ENCODE measurements at regions of chr5 and their contacts with region 1.

Region 1: DNA sequence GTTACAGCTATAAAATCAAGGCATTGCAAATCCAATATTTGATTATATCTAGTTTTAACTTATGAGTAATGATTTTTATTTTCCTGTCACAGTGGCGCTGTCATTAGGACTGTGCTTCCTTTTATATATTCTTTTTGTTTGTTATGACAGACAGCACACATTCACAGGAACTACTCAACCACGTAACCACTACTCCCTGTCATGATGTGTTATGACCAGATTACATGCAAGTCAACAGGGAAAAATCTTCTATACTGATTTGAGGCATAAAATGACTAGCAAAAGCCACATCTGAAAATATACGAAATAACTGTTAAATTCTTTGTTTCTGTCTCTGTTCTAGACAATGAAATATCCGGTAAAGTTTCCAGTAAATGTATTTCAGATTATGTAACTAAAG is 25.4 kb downstream of the SREK1 start:
- DNase-seq: peak; percentile 22
- ATAC-seq: peak; percentile 82
- H3K4me3 ChIP-seq: no peak overlapping the region
- H3K27ac ChIP-seq: no peak overlapping the region
- H3K4me1 ChIP-seq: peaks cover 4% of the 10 kb centered on the region; the same call in 1 of the 2 replicates
- H3K27me3 ChIP-seq: no peaks in the 10 kb centered on the region
- CTCF ChIP-seq: no peak

Region 2: GRCh38 chr5:65721720-65722574 is 447.6 kb before region 1 on chr5 and contains the starts of genes NLN and SGTB:
- CTCF ChIA-PET with region 1: no interaction called
- POLR2A ChIA-PET with region 1: no interaction called
- intact Hi-C with region 1: loop called (anchors 10 kb)
- DNase-seq: peak; percentile 55
- ATAC-seq: peak; percentile 85
- H3K4me3 ChIP-seq: peak within 1 kb of the TSS; percentile 81
- H3K27ac ChIP-seq: peak within 1 kb of the TSS; percentile 18; the same call in 1 of the 2 replicates
- H3K4me1 ChIP-seq: no peaks in the 10 kb centered on the region
- H3K27me3 ChIP-seq: no peaks in the 10 kb centered on the region
- CTCF ChIP-seq: no peak
- total RNA-seq, gene NLN: 7.9 and 13.6 TPM in 2 replicates
- total RNA-seq, gene SGTB: 0.98 and 1.1 TPM in 2 replicates

Region 3: DNA sequence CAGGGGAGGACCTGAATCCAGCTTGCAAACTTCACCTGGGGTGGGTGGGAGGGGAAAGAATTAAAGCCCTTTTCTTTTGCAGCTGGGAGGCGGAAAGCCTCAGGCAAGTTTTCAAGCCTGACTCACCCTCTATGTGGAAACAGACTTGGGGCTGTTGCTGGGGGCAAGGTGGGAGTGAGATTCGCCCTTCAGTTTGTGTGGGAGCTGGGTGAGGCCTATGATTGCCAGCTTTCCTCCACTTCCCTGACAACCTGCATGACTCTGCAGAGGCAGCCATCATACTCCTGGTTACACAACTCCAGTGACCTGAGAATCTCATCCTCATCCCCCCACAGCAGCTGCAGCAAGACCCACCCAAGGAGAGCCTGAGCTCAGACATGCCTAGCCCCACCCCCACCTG is 68.7 kb before region 1 on chr5:
- CTCF ChIA-PET with region 1: no interaction called
- POLR2A ChIA-PET with region 1: no interaction called
- intact Hi-C with region 1: no loop called
- DNase-seq: no peak
- ATAC-seq: no peak
- H3K4me3 ChIP-seq: no peak overlapping the region
- H3K27ac ChIP-seq: no peak overlapping the region
- H3K4me1 ChIP-seq: no peaks in the 10 kb centered on the region
- H3K27me3 ChIP-seq: no peaks in the 10 kb centered on the region
- CTCF ChIP-seq: no peak

Region 4: GRCh38 chr5:66247176-66247960 is 77.8 kb after region 1 on chr5:
- CTCF ChIA-PET with region 1: no interaction called
- POLR2A ChIA-PET with region 1: no interaction called
- intact Hi-C with region 1: no loop called
- DNase-seq: peak; percentile 69
- ATAC-seq: peak; percentile 78
- H3K4me3 ChIP-seq: no peak overlapping the region
- H3K27ac ChIP-seq: peak overlapping the region; percentile 49
- H3K4me1 ChIP-seq: peaks cover 29% of the 10 kb centered on the region
- H3K27me3 ChIP-seq: no peaks in the 10 kb centered on the region
- CTCF ChIP-seq: no peak

Measured in PC-3 (cell line).